Aorta (tissue), 5 donors: ENCODE measurements at regions of chr7 and their contacts with region 1.

Region 1: GRCh38 chr7:30731619-30732018 is 20.3 kb upstream of the INMT start:
- DNase-seq: peak in 1 of 2 donors; percentile 42
- ATAC-seq: no peak
- H3K4me3 ChIP-seq: no peak overlapping the region
- H3K27ac ChIP-seq: no peak overlapping the region
- H3K4me1 ChIP-seq: no peaks in the 10 kb centered on the region
- H3K27me3 ChIP-seq: no peaks in the 10 kb centered on the region

Region 2: GRCh38 chr7:30649717-30650420 is 81.8 kb before region 1 on chr7:
- intact Hi-C with region 1: loop called in 1 of 2 experiments (anchors 10 kb)
- DNase-seq: no peak
- ATAC-seq: no peak
- H3K4me3 ChIP-seq: no peak overlapping the region
- H3K27ac ChIP-seq: no peak overlapping the region
- H3K4me1 ChIP-seq: no peaks in the 10 kb centered on the region
- H3K27me3 ChIP-seq: no peaks in the 10 kb centered on the region